Spleen (tissue), 13 donors: ENCODE measurements at regions of chr6 and their contacts with region 1.

Region 1: DNA sequence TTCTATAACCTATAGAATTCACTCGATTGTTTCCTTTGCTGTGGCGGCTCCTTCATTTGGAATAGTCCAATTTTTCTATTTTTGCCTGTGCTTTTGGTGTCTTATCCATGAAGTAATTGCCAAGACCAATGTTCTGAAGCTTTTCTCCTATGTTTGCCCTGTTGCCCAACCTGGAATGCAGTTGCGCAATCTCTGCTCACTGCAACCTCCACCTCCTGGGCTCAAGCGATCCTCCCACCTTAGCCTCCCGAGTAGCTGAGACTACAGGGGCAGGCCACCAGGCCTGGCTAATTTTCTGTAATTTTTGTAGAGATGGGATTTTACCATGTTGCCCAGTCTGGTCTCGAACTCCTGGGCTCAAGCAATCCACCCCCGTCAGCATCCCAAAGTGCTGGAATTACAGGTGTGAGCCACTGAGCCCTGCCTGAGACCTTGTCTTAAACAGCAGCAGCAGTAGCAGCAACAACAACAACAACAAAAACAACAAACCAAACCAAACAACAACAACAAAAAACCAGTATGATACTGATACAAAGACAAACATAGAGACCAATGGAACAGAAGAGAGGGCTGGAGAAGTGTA is 163.4 kb downstream of the OR2B2 start:
- DNase-seq: no peak
- H3K4me3 ChIP-seq: no peak overlapping the region
- H3K27ac ChIP-seq: no peak overlapping the region
- H3K4me1 ChIP-seq: peaks cover 0 to 14% (median 5%) of the 10 kb centered on the region in 6 donors
- H3K27me3 ChIP-seq: peaks cover 0 to 29% (median 7%) of the 10 kb centered on the region in 7 donors
- CTCF ChIP-seq: no peak
- POLR2A ChIP-seq: no peak

Region 2: GRCh38 chr6:26312501-26313390 is 1436.0 kb before region 1 on chr6:
- intact Hi-C with region 1: no loop called
- DNase-seq: peak; percentile 89
- H3K4me3 ChIP-seq: peak overlapping the region; percentile 26 to 78 (median 54)
- H3K27ac ChIP-seq: peak overlapping the region; percentile 41 to 80 (median 65)
- H3K4me1 ChIP-seq: peaks cover 12 to 42% (median 28%) of the 10 kb centered on the region in 6 donors
- H3K27me3 ChIP-seq: peaks cover 0 to 12% (median 0%) of the 10 kb centered on the region in 7 donors
- CTCF ChIP-seq: no peak
- POLR2A ChIP-seq: no peak

Region 3: GRCh38 chr6:27518881-27519795 is 229.6 kb before region 1 on chr6:
- intact Hi-C with region 1: loop called (anchors 5 kb)
- DNase-seq: peak; percentile 86
- H3K4me3 ChIP-seq: peak overlapping the region; percentile 49 to 84 (median 67)
- H3K27ac ChIP-seq: peak overlapping the region; percentile 83 to 91 (median 88)
- H3K4me1 ChIP-seq: peaks cover 3 to 18% (median 9%) of the 10 kb centered on the region in 6 donors
- H3K27me3 ChIP-seq: peaks cover 0 to 33% (median 5%) of the 10 kb centered on the region in 7 donors
- CTCF ChIP-seq: peak in 10 of 11 experiments; percentile 16 to 75 (median 57)
- POLR2A ChIP-seq: peak in 1 of 3 donors; percentile 2

Region 4: GRCh38 chr6:27553123-27553904 is 195.4 kb before region 1 on chr6:
- intact Hi-C with region 1: no loop called
- DNase-seq: no peak
- H3K4me3 ChIP-seq: peak overlapping the region in 1 of 8 donors; percentile 8
- H3K27ac ChIP-seq: no peak overlapping the region
- H3K4me1 ChIP-seq: peaks cover 0 to 5% (median 0%) of the 10 kb centered on the region in 6 donors
- H3K27me3 ChIP-seq: peaks cover 4 to 100% (median 93%) of the 10 kb centered on the region in 7 donors
- CTCF ChIP-seq: no peak
- POLR2A ChIP-seq: no peak

Region 5: GRCh38 chr6:27700337-27700736 is 48.4 kb before region 1 on chr6:
- intact Hi-C with region 1: no loop called
- DNase-seq: no peak
- H3K4me3 ChIP-seq: no peak overlapping the region
- H3K27ac ChIP-seq: no peak overlapping the region
- H3K4me1 ChIP-seq: no peaks in the 10 kb centered on the region
- H3K27me3 ChIP-seq: peaks cover 0 to 4% (median 0%) of the 10 kb centered on the region in 7 donors
- CTCF ChIP-seq: no peak
- POLR2A ChIP-seq: no peak

Region 6: GRCh38 chr6:27931209-27931608 is 182.5 kb after region 1 on chr6:
- intact Hi-C with region 1: no loop called
- DNase-seq: no peak
- H3K4me3 ChIP-seq: no peak overlapping the region
- H3K27ac ChIP-seq: no peak overlapping the region
- H3K4me1 ChIP-seq: no peaks in the 10 kb centered on the region
- H3K27me3 ChIP-seq: peaks cover 0 to 15% (median 0%) of the 10 kb centered on the region in 7 donors
- CTCF ChIP-seq: no peak
- POLR2A ChIP-seq: no peak